K562 (cell line): ENCODE measurements at regions of chr10 and their contacts with region 1.

Region 1: GRCh38 chr10:69318106-69318866 is 40.0 kb downstream of the HK1 start:
- DNase-seq: peak; percentile 96 to 98 (median 96)
- ATAC-seq: peak; percentile 80
- H3K4me3 ChIP-seq: peak overlapping the region; percentile 61
- H3K27ac ChIP-seq: peak overlapping the region; percentile 99
- H3K4me1 ChIP-seq: peaks cover 52 to 64% of the 10 kb centered on the region in 2 experiments
- H3K27me3 ChIP-seq: no peaks in the 10 kb centered on the region; a peak in 1 of 5 replicates
- CTCF ChIP-seq: 0 out of 6 replicates have a peak, but pooled peaks of 1 of the 3 experiments have one; percentile 1
- EP300 ChIP-seq: no peak
- POLR2A ChIP-seq: no peak
- RAD21 ChIP-seq: no peak

Region 2: GRCh38 chr10:67884313-67884841 is 1433.9 kb before region 1 on chr10 and contains the start of gene SIRT1:
- CTCF ChIA-PET with region 1: no interaction called
- POLR2A ChIA-PET with region 1: no interaction called
- in situ Hi-C with region 1: no loop called
- intact Hi-C with region 1: loop called (anchors 5 kb)
- DNase-seq: peak; percentile 97 to 99 (median 98)
- ATAC-seq: peak; percentile 91
- H3K4me3 ChIP-seq: peak within 1 kb of the TSS; percentile 72
- H3K27ac ChIP-seq: peak within 1 kb of the TSS; percentile 92
- H3K4me1 ChIP-seq: peaks cover 9 to 16% of the 10 kb centered on the region in 2 experiments; a peak in 4 of 5 replicates
- H3K27me3 ChIP-seq: no peaks in the 10 kb centered on the region
- CTCF ChIP-seq: peak in 1 of 3 experiments; percentile 28; a peak in 1 of 6 replicates
- EP300 ChIP-seq: peak; percentile 71
- POLR2A ChIP-seq: peak; percentile 87
- RAD21 ChIP-seq: no peak
- polyA plus RNA-seq, gene SIRT1: 7.8 to 8.8 TPM

Region 3: DNA sequence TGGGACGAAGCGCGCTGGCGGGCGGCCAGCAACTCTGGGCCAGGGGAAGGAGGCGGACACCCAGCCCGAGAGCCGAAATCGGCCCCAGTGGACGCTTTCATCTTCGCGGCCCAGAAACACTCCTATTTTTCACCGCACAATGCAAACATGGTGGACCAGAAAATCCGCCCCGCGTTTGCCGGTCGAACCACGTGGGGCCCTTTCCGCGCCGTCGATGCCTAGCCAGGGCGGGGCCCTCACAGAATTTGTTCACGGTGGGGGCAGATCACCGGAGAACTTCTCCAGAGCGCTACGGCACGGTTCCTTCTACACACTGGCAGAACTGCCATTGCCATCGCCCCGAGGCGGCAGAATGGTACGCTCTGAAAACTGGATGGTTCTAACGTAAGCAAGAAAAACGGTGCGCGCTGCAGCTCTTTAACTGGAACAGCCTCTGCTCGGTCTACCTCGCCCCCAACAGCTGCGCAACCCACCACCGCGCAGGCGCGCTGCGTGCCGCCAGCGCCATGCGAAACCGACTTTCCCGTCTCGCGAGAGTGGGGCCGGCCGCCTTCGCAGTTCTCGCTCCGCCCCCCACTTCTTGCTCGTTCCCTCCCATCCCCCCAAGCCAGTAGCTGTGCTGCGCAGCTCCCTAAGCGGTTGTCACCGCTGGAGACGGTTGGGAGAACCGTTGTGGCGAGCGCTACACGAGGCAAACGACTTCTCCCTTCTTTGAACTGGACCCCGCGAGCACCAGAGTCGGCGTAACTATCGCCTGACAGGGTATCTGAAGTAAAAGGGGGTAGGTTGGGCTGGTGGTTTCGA is 986.6 kb before region 1 on chr10 and contains the start of gene HNRNPH3:
- CTCF ChIA-PET with region 1: no interaction called
- POLR2A ChIA-PET with region 1: no interaction called
- in situ Hi-C with region 1: no loop called
- intact Hi-C with region 1: no loop called
- DNase-seq: peak; percentile 96 to 100 (median 97)
- ATAC-seq: peak; percentile 85
- H3K4me3 ChIP-seq: peak within 1 kb of the TSS; percentile 66
- H3K27ac ChIP-seq: peak within 1 kb of the TSS; percentile 98
- H3K4me1 ChIP-seq: peaks cover 20 to 28% of the 10 kb centered on the region in 2 experiments
- H3K27me3 ChIP-seq: no peaks in the 10 kb centered on the region
- CTCF ChIP-seq: peak in 2 of 3 experiments; percentile 8 to 45; a peak in 2 of 6 replicates
- EP300 ChIP-seq: peak; percentile 42; the same call in 1 of the 2 replicates
- POLR2A ChIP-seq: peak; percentile 99
- RAD21 ChIP-seq: no peak; a peak in 1 of 4 replicates
- polyA plus RNA-seq, gene HNRNPH3: 129 to 208 TPM

Region 4: GRCh38 chr10:69237528-69238159 is 80.6 kb before region 1 on chr10:
- CTCF ChIA-PET with region 1: no interaction called
- POLR2A ChIA-PET with region 1: interaction called, 7 read pairs
- in situ Hi-C with region 1: no loop called
- intact Hi-C with region 1: loop called (anchors 2 kb)
- DNase-seq: peak; percentile 89 to 94 (median 92)
- ATAC-seq: peak; percentile 97
- H3K4me3 ChIP-seq: no peak overlapping the region
- H3K27ac ChIP-seq: no peak overlapping the region
- H3K4me1 ChIP-seq: peaks cover 13% of the 10 kb centered on the region in 2 experiments; a peak in 4 of 5 replicates
- H3K27me3 ChIP-seq: no peaks in the 10 kb centered on the region
- CTCF ChIP-seq: peak; percentile 94 to 99 (median 97)
- EP300 ChIP-seq: no peak
- POLR2A ChIP-seq: no peak
- RAD21 ChIP-seq: peak; percentile 99 to 100

Region 5: DNA sequence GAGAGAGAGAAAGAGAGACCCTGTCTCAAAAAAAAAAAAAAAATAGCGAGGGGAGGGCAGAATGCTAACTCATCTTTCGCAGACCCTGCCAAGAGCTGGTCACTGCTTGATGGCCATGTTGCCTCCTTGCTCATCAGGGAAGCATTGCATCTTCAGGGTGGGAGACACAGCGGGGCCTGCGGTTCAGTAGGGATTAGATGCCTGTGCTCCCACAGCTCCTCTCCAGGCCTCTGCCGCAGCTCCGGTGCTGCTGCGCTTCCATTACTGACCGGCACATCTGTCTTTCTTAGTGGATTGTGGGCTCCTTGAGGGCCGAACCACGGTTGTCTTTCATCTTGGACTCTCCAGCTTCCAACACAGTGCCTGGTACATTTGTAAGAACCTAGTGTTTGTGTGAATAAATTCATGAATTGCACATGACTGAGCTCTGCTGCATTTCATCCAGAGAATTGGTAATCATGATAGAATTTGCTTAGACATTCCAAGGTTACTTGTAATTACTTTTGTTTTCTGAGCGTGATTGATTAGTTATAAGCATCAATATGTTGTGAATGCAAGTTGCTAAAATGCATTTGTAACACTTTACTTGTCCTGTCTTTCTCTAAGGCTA is 23.2 kb before region 1 on chr10:
- CTCF ChIA-PET with region 1: no interaction called
- POLR2A ChIA-PET with region 1: interaction called, 12 read pairs
- in situ Hi-C with region 1: no loop called
- intact Hi-C with region 1: no loop called
- DNase-seq: no peak
- ATAC-seq: no peak
- H3K4me3 ChIP-seq: no peak overlapping the region
- H3K27ac ChIP-seq: no peak overlapping the region
- H3K4me1 ChIP-seq: peaks cover 13 to 14% of the 10 kb centered on the region in 2 experiments; a peak in 4 of 5 replicates
- H3K27me3 ChIP-seq: no peaks in the 10 kb centered on the region; a peak in 1 of 5 replicates
- CTCF ChIP-seq: no peak
- EP300 ChIP-seq: no peak
- POLR2A ChIP-seq: no peak
- RAD21 ChIP-seq: no peak

Region 6: GRCh38 chr10:69303632-69304051 is 14.6 kb before region 1 on chr10:
- CTCF ChIA-PET with region 1: no interaction called
- POLR2A ChIA-PET with region 1: interaction called, 21 read pairs
- in situ Hi-C with region 1: no loop called
- intact Hi-C with region 1: no loop called
- DNase-seq: no peak
- ATAC-seq: no peak
- H3K4me3 ChIP-seq: no peak overlapping the region
- H3K27ac ChIP-seq: no peak overlapping the region
- H3K4me1 ChIP-seq: peaks cover 1 to 3% of the 10 kb centered on the region in 2 experiments; a peak in 3 of 5 replicates
- H3K27me3 ChIP-seq: no peaks in the 10 kb centered on the region
- CTCF ChIP-seq: no peak
- EP300 ChIP-seq: no peak
- POLR2A ChIP-seq: no peak
- RAD21 ChIP-seq: no peak

Region 7: DNA sequence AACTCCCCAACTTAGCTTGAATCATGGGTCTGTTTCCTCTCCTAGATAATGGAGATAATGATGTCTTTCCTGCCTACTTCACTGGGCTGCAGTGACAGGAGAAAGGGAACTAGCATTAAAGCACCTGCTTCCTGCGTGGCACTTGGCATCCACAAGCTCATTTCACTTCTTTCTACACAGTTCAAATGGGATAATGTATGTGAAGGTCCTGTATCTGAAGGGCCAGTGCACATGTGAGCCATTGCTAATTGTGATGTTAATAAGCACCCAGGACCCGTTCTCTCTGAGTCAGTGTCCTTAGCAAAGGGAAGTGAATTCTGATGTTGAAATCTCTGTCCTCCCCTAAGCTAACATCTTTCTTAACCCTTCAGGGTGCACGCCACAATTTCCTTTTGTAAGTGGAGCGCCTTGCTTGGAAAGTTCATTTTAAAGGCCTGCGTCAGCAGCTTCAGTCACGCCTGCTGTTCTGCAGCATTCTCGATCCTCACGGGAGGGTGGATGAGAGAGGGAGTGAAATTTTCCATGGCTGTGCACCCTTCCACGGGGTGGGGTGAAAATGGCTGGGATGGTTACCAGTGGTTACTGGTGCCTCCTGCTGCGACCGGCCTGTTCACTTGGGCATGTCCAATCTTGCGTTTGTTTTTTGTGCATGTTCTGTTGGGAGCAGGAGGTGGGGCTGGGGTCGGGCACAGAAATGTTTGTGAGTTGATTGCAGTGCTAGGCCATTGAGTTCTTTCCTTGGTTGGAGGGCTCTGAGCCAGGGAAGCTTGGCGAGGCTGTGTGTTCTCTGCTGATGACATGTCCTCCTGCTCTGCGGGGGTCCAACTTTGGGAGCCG is 19.2 kb after region 1 on chr10:
- CTCF ChIA-PET with region 1: no interaction called
- POLR2A ChIA-PET with region 1: interaction called, 92 read pairs
- in situ Hi-C with region 1: no loop called
- intact Hi-C with region 1: loop called (anchors 1 kb)
- DNase-seq: no peak
- ATAC-seq: no peak
- H3K4me3 ChIP-seq: no peak overlapping the region
- H3K27ac ChIP-seq: peak overlapping the region; percentile 21; the same call in 2 of the 3 replicates
- H3K4me1 ChIP-seq: peaks cover 53 to 58% of the 10 kb centered on the region in 2 experiments
- H3K27me3 ChIP-seq: no peaks in the 10 kb centered on the region
- CTCF ChIP-seq: no peak
- EP300 ChIP-seq: no peak
- POLR2A ChIP-seq: no peak
- RAD21 ChIP-seq: no peak

Region 8: GRCh38 chr10:69392481-69393000 is 74.3 kb after region 1 on chr10:
- CTCF ChIA-PET with region 1: no interaction called
- POLR2A ChIA-PET with region 1: interaction called, 3 read pairs
- in situ Hi-C with region 1: no loop called
- intact Hi-C with region 1: loop called (anchors 1 kb)
- DNase-seq: peak; percentile 83 to 92 (median 87)
- ATAC-seq: peak; percentile 92
- H3K4me3 ChIP-seq: no peak overlapping the region
- H3K27ac ChIP-seq: peak overlapping the region; percentile 10; the same call in 1 of the 3 replicates
- H3K4me1 ChIP-seq: peaks cover 12 to 17% of the 10 kb centered on the region in 2 experiments; a peak in 4 of 5 replicates
- H3K27me3 ChIP-seq: no peaks in the 10 kb centered on the region
- CTCF ChIP-seq: peak; percentile 92 to 98 (median 97)
- EP300 ChIP-seq: no peak
- POLR2A ChIP-seq: no peak; the same call in 1 of the 2 replicates
- RAD21 ChIP-seq: peak; percentile 96 to 98

Region 9: DNA sequence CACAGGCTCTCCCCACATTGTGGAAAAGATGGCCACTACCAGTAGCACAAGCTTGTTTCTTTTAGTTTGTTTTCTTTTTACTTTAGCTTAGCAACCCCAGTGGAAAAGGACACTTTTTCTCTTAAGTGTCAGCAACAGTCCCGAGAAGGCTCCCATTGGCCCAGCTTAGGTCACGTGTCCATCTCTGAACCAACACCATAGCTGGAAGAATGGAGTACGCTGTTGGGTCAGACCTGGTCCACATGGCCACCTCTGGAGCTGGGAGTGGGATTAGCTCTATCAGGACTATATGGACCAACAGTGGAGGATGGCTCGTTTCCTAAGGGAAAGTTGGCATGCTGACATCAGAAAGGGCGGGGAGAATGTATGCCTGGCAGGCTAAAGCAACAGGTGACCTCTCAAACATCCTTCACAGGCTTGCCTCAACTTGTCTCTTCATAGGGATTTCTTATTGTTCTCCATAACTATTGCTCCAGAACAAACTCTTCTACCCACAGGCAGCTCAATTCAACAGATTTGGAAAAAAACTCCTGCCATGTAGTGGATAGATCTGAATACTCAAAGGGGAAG is 282.6 kb after region 1 on chr10:
- CTCF ChIA-PET with region 1: no interaction called
- POLR2A ChIA-PET with region 1: no interaction called
- in situ Hi-C with region 1: no loop called
- intact Hi-C with region 1: no loop called
- DNase-seq: no peak
- ATAC-seq: no peak
- H3K4me3 ChIP-seq: no peak overlapping the region
- H3K27ac ChIP-seq: no peak overlapping the region
- H3K4me1 ChIP-seq: no peaks in the 10 kb centered on the region
- H3K27me3 ChIP-seq: no peaks in the 10 kb centered on the region
- CTCF ChIP-seq: no peak
- EP300 ChIP-seq: no peak
- POLR2A ChIP-seq: no peak
- RAD21 ChIP-seq: no peak